Mammary epithelial cell (primary cell): ENCODE measurements at regions of chr10 and their contacts with region 1.

Region 1: GRCh38 chr10:47189802-47190700 is 109.9 kb upstream of the GDF10 start:
- DNase-seq: peak; percentile 64
- H3K4me3 ChIP-seq: no peak overlapping the region
- H3K27ac ChIP-seq: no peak overlapping the region
- H3K4me1 ChIP-seq: no peaks in the 10 kb centered on the region
- H3K27me3 ChIP-seq: peaks cover 2% of the 10 kb centered on the region
- CTCF ChIP-seq: no peak

Region 2: DNA sequence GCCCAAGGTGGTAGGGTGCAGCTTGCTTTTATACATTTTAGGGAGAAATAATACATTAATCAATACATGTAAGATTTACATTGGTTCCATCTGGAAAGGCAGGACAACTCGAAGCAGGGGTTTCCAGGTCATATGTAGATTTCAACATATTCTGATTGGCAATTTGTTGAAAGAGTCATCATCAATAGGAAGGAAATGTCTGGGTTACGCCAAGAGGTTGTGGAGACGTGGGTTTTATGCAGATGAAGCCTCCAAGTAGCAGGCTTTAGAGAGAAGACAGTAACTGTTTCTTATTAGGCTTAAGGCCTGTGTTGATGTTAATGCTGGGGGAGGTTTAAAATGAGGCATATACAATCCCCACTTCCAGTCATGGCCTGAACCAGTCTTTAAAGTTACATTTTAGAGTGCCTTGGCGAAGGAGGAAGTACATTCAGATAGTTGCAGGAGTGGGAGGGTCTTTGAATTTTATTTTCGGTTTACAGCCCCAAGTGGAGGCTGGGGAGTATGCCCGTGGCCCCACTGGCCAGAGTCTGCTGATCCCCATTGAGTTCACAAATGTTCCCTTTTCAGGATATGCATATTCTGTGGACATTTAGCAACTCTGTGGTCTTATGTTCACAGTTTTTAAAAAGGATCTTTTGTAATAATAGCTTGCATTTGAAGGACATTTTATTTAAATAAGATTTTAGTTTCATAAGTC is 56.0 kb before region 1 on chr10:
- CTCF ChIA-PET with region 1: no interaction called
- dilution Hi-C with region 1: loop called (anchors 5 kb)
- in situ Hi-C with region 1: no loop called
- intact Hi-C with region 1: no loop called
- DNase-seq: no peak
- H3K4me3 ChIP-seq: no peak overlapping the region
- H3K27ac ChIP-seq: no peak overlapping the region
- H3K4me1 ChIP-seq: peaks cover 16% of the 10 kb centered on the region
- H3K27me3 ChIP-seq: no peaks in the 10 kb centered on the region
- CTCF ChIP-seq: no peak

Region 3: DNA sequence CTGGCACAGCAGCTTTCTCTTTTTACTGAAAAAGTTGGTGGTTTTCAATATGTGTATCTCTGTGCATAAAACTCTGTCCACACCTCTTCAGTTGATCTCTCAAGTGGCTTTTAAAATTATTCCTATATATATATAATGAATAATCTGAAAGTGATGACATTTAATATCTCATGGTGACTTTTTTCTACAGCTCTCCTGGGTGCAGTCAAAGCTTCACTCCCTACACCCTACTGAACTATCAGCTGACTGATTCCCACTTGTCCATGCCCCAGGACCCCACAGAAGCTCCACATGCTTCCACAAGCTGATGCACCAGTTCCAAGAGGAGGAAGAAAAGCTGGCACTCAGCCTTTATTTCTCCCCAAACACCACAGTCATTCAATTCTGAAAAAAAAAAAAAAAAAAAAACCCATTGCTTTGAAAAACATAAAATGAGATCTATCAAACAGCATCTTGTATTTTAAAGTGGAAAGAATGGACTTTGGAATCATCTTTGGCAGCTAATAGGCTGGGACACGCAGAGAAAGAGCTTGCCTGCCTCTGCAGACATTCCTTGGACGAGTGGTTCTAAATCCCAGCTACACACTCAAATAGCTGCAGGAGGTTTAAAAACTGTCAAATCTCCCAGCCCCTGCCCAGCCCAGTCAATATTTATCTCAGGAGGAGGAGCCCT is 34.6 kb after region 1 on chr10:
- CTCF ChIA-PET with region 1: no interaction called
- dilution Hi-C with region 1: no loop called
- in situ Hi-C with region 1: no loop called
- intact Hi-C with region 1: no loop called
- DNase-seq: no peak
- H3K4me3 ChIP-seq: no peak overlapping the region
- H3K27ac ChIP-seq: no peak overlapping the region
- H3K4me1 ChIP-seq: no peaks in the 10 kb centered on the region
- H3K27me3 ChIP-seq: no peaks in the 10 kb centered on the region
- CTCF ChIP-seq: no peak

Region 4: DNA sequence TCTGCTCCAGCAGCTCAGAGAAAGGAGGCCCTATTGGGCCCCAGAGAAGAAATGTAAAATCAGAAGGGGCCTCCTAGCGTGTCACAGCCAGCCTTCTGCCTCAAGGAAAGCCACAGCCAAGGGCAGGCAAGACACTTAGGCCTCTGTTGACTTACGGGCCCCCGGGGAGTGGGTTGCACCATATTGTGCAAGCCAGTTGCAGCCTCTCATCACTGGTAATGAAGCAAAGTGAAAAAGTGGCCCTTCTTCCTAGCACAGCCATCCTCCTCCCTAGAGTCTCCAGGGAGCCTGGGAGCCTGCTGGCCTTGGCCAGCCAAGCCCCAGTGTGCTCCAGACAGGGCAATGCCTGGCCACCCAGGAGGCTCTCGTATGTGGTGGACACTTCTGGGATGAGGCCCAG is 53.7 kb after region 1 on chr10:
- CTCF ChIA-PET with region 1: no interaction called
- dilution Hi-C with region 1: loop called (anchors 5 kb)
- in situ Hi-C with region 1: no loop called
- intact Hi-C with region 1: no loop called
- DNase-seq: no peak
- H3K4me3 ChIP-seq: no peak overlapping the region
- H3K27ac ChIP-seq: no peak overlapping the region
- H3K4me1 ChIP-seq: no peaks in the 10 kb centered on the region
- H3K27me3 ChIP-seq: no peaks in the 10 kb centered on the region
- CTCF ChIP-seq: no peak

Region 5: DNA sequence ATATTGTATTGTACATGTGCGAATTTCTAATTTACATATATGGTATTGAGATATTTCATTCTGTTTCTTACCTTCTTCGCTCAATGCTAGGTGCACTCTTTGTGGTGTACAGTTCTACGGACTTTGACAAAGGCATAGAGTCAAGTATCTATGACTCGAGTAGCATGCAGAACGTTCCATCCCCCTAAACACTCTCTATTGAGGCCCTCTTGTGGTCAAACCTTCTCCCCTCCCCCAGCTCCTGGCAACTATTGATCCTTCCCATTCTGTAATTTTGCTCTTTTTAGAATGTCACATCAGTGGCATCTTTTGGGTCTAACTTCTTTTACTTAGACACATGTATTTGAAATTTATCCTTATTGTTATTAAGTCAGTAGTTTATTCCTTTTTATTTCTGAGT is 79.2 kb after region 1 on chr10:
- CTCF ChIA-PET with region 1: no interaction called
- dilution Hi-C with region 1: no loop called
- in situ Hi-C with region 1: no loop called
- intact Hi-C with region 1: no loop called
- DNase-seq: no peak
- H3K4me3 ChIP-seq: no peak overlapping the region
- H3K27ac ChIP-seq: no peak overlapping the region
- H3K4me1 ChIP-seq: no peaks in the 10 kb centered on the region
- H3K27me3 ChIP-seq: peaks cover under 1% of the 10 kb centered on the region
- CTCF ChIP-seq: no peak

Region 6: DNA sequence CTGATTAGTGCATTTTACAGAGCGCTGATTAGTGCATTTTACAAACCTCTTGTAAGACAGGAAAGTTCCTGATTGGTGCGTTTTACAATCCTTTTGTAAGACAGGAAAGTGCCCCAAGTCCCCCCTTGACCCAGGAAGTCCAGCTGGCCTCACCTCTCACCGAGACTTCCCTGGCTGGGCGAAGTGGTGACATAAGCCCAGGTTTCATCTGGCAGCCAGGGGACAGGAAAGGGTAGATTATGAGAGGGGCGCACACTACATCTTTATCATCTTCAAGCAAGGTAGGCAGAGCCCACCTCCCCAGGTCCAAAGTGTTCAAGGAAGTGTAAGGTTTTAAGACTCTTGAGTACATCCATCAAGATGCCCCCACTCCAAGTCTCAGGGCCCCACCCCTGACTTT is 104.5 kb after region 1 on chr10:
- CTCF ChIA-PET with region 1: no interaction called
- dilution Hi-C with region 1: loop called (anchors 5 kb)
- in situ Hi-C with region 1: no loop called
- intact Hi-C with region 1: no loop called
- DNase-seq: no peak
- H3K4me3 ChIP-seq: no peak overlapping the region
- H3K27ac ChIP-seq: no peak overlapping the region
- H3K4me1 ChIP-seq: no peaks in the 10 kb centered on the region
- H3K27me3 ChIP-seq: peaks cover 2% of the 10 kb centered on the region
- CTCF ChIP-seq: no peak

Region 7: DNA sequence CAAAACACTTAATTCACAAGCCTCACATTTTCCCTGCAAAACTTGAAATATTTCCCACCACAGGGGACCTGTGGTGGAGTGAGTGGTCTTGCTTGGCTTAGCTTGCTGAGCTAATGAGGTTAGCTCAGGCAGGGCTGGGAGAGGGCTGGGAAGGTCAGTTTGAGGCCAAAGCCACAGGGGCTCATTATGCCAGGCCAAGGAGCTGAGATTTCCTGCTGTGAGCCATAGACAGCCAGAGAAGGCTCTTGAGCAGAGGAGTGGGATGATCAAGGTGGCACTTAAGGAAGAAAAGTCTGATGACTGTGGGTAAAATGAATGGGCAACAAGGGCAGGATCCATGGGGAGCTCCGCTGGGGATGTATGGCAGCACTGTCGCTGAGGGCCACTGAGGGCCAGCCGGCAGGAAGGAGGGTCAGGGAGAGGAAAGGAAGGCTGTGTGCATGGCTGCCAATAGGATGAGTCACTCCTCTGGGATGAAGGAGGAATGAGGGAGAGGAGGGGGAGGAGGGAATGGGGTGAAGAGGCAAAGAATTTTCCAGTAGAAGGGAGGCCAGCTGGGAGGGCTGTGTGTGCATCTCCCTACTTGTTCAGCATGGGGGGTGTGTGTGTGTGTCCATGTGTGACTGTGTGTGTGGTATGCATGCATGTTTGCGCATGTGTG is 212.7 kb after region 1 on chr10:
- CTCF ChIA-PET with region 1: no interaction called
- dilution Hi-C with region 1: no loop called
- in situ Hi-C with region 1: no loop called
- intact Hi-C with region 1: no loop called
- DNase-seq: peak; percentile 50
- H3K4me3 ChIP-seq: no peak overlapping the region
- H3K27ac ChIP-seq: peak overlapping the region; percentile 9
- H3K4me1 ChIP-seq: peaks cover 45% of the 10 kb centered on the region
- H3K27me3 ChIP-seq: no peaks in the 10 kb centered on the region
- CTCF ChIP-seq: no peak